ACHN (cell line): ENCODE measurements at regions of chr7 and their contacts with region 1.

Region 1: GRCh38 chr7:93890464-93891068 is at the start of gene TFPI2:
- DNase-seq: peak; percentile 97

Region 2: GRCh38 chr7:93715234-93715633 is 175.3 kb before region 1 on chr7:
- in situ Hi-C with region 1: loop called (anchors 25 kb)
- DNase-seq: peak; percentile 68